ENCODE measurements at regions of chr3 and their contacts with region 1.

Region 1: DNA sequence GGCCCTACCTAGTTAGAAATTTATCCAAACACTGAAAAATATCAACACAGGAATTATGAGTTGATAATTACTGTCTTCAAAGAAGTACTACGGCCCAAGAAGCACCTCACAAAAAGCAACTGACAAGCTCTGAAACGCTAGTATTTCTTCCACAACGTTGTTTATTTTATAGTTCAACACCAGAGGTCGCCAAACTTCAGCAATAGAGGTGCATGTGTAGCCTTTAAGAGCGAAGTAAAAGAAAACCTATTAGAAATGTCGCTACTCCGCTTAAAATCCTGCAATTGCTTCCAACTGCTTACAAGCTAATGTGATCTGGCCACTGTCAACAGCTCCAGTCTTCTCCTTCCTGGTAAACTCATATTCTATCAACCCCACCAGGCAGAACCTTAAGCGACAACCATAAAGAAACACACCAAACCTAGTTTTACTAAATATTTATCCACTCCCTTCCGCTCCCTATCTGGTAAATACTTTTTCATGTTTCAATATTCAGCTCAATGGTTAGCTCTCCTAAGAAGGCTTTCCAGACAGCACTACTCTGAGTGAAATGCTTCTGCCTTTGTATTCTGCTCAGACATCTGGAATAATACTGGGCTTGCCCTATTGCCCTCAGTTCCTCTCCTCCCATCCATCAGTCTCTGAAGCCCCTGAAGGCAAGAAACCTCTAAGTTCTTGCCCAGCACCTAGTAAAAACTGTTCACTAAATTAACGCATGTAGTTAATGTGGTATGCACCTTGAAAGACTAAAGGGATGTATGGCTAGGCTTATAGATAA is 110.2 kb downstream of the NR1I2 start:
- DNase-seq: peak; percentile 48
- H3K4me3 ChIP-seq: no peak overlapping the region
- H3K27ac ChIP-seq: no peak overlapping the region
- H3K4me1 ChIP-seq: no peaks in the 10 kb centered on the region
- H3K27me3 ChIP-seq: no peaks in the 10 kb centered on the region
- CTCF ChIP-seq: peak; percentile 51

Region 2: DNA sequence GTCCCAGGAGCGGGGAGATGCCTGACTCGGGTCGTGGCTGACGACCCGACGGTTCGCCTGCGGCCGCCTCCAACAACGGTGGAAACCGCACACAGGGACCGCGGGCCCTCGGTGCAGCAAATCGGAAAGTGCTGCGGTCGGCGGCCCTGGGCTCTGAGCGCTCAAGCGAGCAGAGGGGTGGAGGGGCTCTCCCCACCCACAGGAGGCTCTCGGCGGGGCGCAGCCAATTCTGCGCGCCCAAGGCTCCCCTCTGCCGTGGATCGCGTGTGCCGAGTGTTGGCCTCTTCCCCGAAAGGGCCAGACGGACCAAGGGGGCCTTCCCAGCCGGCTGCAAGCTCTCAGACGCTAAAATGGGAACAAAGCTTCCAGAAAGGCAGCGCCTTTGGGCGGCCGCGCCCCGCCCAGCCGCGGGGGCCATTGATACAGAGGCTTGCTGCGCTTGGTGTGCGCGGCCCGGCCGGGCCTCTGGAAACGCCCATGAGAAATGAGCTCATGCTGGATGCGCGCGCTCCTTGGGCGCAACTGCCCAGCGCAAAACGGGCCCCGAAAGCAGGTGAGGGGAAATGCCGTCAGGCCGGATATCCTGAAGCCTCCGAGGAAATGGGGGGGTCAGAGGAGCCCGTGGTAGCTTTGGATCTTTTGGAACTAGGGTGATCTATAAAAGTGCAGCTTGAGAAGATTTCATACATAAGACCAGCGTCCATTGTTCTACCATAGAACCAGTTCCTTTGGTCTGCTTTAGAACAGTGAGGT is 203.3 kb after region 1 on chr3:
- intact Hi-C with region 1: loop called (anchors 10 kb)
- DNase-seq: peak; percentile 92
- H3K4me3 ChIP-seq: peak overlapping the region; percentile 88
- H3K27ac ChIP-seq: peak overlapping the region; percentile 100
- H3K4me1 ChIP-seq: peaks cover 12% of the 10 kb centered on the region
- H3K27me3 ChIP-seq: no peaks in the 10 kb centered on the region
- CTCF ChIP-seq: no peak

Region 3: DNA sequence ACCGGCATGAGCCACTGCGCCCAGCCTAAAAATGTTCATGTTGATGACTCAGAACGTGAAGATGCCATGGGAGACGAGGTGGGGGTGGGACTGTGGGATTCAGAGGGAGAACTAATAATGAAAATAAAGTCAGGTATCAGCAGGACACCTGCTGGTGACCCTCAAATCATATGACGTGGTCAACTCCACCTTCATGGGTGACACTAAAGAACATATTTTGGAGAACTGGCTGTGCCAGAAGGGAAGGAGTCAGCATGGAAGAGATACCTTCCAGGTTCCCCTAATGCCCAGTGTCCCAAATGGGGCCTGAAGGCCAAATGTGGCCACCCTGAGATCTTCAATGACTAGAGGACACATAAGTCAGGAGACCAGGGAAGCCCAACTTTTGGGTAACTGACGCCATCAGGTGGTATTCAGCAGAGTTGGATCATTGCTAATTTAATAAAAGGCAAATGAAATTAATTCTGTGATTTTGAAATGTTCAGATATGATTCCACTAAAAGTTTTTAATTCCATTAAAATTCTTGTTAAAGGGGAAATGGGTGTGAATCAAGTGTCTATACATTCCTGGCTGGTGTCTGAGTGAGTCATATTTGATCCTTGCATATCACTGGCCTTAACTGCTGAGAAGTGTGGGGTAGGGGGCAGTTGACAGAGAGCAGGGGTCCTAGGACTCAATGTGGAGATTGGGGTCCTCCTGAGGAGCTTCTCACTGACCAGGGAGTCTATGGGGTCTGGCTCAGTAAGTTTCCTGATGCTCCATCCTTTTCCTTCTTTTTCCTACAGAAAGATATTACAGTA is 290.8 kb after region 1 on chr3:
- intact Hi-C with region 1: loop called (anchors 5 kb)
- DNase-seq: no peak
- H3K4me3 ChIP-seq: no peak overlapping the region
- H3K27ac ChIP-seq: no peak overlapping the region
- H3K4me1 ChIP-seq: no peaks in the 10 kb centered on the region
- H3K27me3 ChIP-seq: no peaks in the 10 kb centered on the region
- CTCF ChIP-seq: peak; percentile 26

Region 4: GRCh38 chr3:120239644-120240043 is 347.5 kb after region 1 on chr3:
- intact Hi-C with region 1: loop called (anchors 5 kb)
- DNase-seq: no peak
- H3K4me3 ChIP-seq: no peak overlapping the region
- H3K27ac ChIP-seq: no peak overlapping the region
- H3K4me1 ChIP-seq: no peaks in the 10 kb centered on the region
- H3K27me3 ChIP-seq: no peaks in the 10 kb centered on the region
- CTCF ChIP-seq: no peak